Activated CD4-positive, alpha-beta T cell treated with anti-CD3 and anti-CD28 coated beads, Interleukin-2, amount 10 ng/mL, durations not matched to agents 24 days and 14 days (primary cell): ENCODE measurements at regions of chr2 and their contacts with region 1.

Region 1: GRCh38 chr2:227460070-227460485 is 11.9 kb upstream of the AGFG1 start:
- DNase-seq: peak; percentile 79
- H3K4me3 Mint-ChIP-seq: peak overlapping the region; percentile 51
- H3K27ac Mint-ChIP-seq: peak overlapping the region; percentile 78
- H3K4me1 Mint-ChIP-seq: peaks cover 68% of the 10 kb centered on the region
- H3K27me3 Mint-ChIP-seq: no peaks in the 10 kb centered on the region

Region 2: DNA sequence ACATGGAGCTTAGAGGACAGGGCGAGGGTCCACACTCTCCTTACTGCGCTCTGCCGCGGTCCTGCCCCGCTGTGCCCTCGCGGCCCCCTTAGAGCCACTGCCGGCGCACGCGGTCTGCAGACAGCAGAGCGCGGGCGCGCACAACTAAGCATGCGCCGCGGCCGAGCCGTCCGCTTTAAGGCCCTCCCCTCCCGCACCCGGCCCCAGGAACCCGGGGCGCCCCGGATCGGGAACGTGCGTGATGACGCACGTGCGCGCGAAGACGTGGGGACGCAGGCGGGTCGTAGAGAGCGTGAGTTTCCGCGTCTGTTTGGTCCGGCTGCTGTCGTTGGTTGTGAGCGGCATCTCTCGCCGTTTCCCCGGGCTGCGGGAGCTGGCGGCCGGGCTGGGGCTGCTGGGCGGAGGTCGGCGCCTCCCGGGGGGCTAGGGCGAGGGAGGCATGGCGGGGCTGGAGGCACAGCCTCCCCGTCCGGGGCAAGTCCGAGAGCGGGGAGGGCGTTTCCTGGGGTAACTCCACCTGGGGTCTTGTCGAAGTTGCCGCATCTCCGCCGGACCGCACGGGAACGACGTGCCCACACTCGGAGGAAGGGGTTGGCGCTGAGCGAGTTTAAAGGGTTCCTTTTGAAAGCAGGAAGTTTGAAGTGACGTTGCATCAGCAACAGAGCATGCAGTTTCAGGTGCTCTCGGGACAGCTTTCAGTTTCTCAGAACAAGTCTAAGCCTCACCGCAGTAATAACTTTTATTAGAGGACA is 624.1 kb before region 1 on chr2 and contains the start of gene RHBDD1:
- intact Hi-C with region 1: loop called (anchors 2 kb)
- DNase-seq: peak; percentile 98
- H3K4me3 Mint-ChIP-seq: peak within 1 kb of the TSS; percentile 95
- H3K27ac Mint-ChIP-seq: peak within 1 kb of the TSS; percentile 97
- H3K4me1 Mint-ChIP-seq: peaks cover 54% of the 10 kb centered on the region
- H3K27me3 Mint-ChIP-seq: no peaks in the 10 kb centered on the region
- total RNA-seq, gene RHBDD1: 41.3 and 44.7 TPM in 2 replicates

Region 3: GRCh38 chr2:227295806-227296205 is 164.3 kb before region 1 on chr2:
- intact Hi-C with region 1: no loop called
- DNase-seq: no peak
- H3K4me3 Mint-ChIP-seq: no peak overlapping the region
- H3K27ac Mint-ChIP-seq: no peak overlapping the region
- H3K4me1 Mint-ChIP-seq: peaks cover 2% of the 10 kb centered on the region
- H3K27me3 Mint-ChIP-seq: no peaks in the 10 kb centered on the region

Region 4: DNA sequence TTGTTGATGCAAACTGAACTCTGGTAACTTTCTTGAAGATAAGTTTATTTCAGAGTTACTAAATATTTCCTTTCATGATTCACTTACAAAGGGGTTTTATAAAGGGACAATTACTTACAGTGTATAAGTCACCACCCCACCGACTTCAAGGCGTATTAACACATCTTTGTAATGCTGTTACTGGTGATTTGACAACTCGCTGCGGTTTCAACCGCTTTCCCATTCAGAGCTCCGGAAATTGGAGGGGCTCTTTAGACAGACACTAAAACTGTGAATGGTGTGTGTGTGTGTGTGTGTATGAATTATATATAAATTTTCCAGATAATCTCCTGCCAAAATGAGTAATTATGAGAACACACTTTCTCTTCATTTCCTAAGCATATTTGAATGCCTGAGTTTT is 85.9 kb before region 1 on chr2:
- intact Hi-C with region 1: loop called (anchors 1 kb)
- DNase-seq: peak; percentile 70
- H3K4me3 Mint-ChIP-seq: no peak overlapping the region
- H3K27ac Mint-ChIP-seq: no peak overlapping the region
- H3K4me1 Mint-ChIP-seq: peaks cover 12% of the 10 kb centered on the region
- H3K27me3 Mint-ChIP-seq: no peaks in the 10 kb centered on the region

Region 5: GRCh38 chr2:227471924-227472264 is 11.8 kb after region 1 on chr2 and contains the start of gene AGFG1:
- intact Hi-C with region 1: loop called (anchors 1 kb)
- DNase-seq: peak; percentile 96
- H3K4me3 Mint-ChIP-seq: peak within 1 kb of the TSS; percentile 93
- H3K27ac Mint-ChIP-seq: peak within 1 kb of the TSS; percentile 84
- H3K4me1 Mint-ChIP-seq: peaks cover 41% of the 10 kb centered on the region
- H3K27me3 Mint-ChIP-seq: no peaks in the 10 kb centered on the region
- total RNA-seq, gene AGFG1: 221 and 229 TPM in 2 replicates

Region 6: DNA sequence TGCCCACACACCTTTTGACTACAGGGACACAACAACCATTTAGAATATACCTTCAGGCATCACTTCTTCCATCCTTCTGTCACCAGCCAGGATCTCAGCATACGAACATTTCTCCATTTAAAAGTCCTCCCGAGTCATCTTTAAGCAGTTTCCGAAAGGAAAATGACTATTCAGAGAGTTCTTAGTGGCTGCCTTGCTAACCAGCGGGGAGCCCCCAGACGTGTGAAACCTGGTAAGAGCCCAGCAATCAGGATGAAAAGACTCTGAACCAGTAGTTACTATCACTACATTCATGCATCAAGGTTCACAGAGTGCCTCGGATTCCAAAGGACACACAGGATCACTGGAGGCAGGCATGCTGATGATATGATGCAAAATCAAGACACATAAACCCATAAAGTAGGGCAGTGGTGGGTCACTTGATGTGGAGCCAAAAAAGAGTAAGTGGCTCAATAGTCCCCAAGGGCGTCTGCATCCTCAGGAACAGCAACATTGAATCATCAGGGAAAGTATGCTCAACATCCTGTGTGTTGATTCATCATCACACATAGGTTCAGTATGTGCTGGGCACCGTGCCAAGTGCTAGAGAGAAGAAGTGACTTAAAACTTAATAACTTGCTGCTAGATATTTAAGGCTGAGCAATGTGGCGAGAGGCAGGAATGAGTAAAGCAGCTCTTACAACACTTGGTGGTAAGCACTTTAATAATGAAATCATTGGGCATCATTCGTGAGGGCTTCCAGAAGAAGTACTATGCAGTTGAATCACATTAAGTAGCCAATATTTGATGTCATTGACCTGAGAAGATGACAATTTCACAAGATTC is 358.0 kb after region 1 on chr2:
- intact Hi-C with region 1: loop called (anchors 1 kb)
- DNase-seq: peak; percentile 73
- H3K4me3 Mint-ChIP-seq: peak overlapping the region; percentile 27
- H3K27ac Mint-ChIP-seq: peak overlapping the region; percentile 89
- H3K4me1 Mint-ChIP-seq: peaks cover 19% of the 10 kb centered on the region
- H3K27me3 Mint-ChIP-seq: peaks cover 2% of the 10 kb centered on the region